ENCODE measurements at regions of chr22 and their contacts with region 1.

Region 1: DNA sequence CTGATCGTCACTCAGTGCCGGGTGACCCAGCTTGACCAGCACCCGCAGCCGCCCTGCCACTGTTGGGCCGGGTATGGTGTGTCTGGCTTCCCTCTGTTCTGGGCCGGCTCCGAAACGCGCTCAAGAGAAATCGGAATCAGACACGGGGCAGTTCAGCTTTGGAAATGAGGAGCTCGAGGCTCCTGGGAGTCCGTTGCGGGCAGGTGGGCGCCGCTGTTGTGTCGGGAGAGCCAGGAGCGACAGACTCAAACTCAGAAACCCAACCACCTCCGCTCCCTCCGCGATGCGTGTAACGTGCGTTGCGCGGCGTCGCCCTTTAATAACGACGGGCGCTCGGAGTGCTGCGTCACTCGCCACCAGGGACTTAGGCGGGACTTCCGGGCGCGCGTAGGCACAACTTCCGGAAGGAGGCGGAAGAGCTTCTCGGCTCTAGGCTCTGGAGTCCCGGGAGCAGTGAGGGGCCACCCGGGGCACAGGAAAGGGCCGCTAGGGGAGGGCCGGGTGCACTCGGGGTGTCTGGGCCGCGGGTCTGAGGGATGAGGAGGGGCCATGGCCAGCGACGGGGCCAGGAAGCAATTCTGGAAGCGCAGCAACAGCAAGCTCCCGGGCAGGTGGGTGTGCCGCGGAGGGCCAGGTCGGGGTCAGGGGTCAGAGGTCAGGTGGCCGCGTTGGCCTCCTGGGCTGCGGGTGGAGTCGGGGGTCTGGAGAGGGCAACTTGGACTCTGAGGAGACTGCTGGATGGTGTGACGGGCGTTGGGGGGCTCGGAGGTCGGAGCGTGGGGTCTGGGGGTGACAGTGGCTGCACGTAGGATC is at the start of gene TBC1D22A:
- DNase-seq: peak; percentile 91
- H3K4me3 Mint-ChIP-seq: peak within 1 kb of the TSS; percentile 99
- H3K27ac Mint-ChIP-seq: peak within 1 kb of the TSS; percentile 95
- H3K4me1 Mint-ChIP-seq: peaks cover 38% of the 10 kb centered on the region
- H3K27me3 Mint-ChIP-seq: no peaks in the 10 kb centered on the region
- total RNA-seq, gene TBC1D22A: 34.8 and 38.3 TPM in 2 replicates

Region 2: GRCh38 chr22:46737976-46738646 is 24.3 kb before region 1 on chr22 and contains the start of gene CERK:
- intact Hi-C with region 1: loop called (anchors 1 kb)
- DNase-seq: peak; percentile 62
- H3K4me3 Mint-ChIP-seq: peak within 1 kb of the TSS; percentile 100
- H3K27ac Mint-ChIP-seq: peak within 1 kb of the TSS; percentile 99
- H3K4me1 Mint-ChIP-seq: peaks cover 34% of the 10 kb centered on the region
- H3K27me3 Mint-ChIP-seq: no peaks in the 10 kb centered on the region
- total RNA-seq, gene CERK: 57.1 and 62.8 TPM in 2 replicates

Region 3: GRCh38 chr22:46791201-46791731 is 28.8 kb after region 1 on chr22:
- intact Hi-C with region 1: loop called (anchors 1 kb)
- DNase-seq: peak; percentile 72
- H3K4me3 Mint-ChIP-seq: peak overlapping the region; percentile 75
- H3K27ac Mint-ChIP-seq: peak overlapping the region; percentile 100
- H3K4me1 Mint-ChIP-seq: peaks cover 39% of the 10 kb centered on the region
- H3K27me3 Mint-ChIP-seq: no peaks in the 10 kb centered on the region

Region 4: DNA sequence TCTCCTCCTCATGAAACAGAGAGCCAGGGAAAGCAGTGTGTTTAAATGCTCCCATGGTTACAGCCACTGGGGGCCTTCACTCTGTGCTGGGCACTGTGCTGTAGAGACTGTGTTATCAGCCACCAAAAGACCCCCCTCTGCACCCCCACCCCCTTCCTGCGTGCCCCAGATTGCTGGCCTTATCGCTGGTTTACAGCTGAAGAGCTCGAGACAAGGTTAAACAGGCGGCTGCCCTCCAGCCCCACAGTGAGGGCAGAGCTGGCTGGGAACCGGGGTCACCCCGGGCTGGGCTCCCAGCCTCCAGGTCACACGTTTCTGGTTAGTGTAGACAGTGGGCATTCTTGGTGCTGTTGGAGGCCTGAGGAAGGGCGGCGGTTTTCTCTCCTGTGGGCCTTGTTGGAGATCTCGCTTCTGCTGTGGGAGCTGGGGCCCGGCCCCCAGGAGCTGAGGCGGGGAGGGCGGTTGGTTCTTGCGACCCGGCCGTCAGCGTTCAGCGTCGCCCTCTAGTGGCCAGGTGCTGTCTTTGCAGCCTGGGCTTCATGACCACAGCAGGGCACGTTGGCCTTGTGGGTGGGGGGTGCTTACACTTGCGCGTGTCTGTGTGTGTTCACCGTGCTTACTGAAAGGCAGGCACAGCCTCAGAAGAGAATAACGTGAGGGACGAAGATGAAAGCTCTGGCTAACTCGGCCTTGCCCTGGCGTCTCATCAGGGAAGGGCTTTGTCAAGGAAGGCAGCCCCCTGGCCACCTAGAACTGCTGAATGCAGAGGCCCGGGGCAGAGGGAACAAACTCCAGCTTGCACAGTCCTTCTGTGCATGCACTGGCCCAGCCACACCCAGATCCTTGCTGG is 40.8 kb after region 1 on chr22:
- intact Hi-C with region 1: loop called (anchors 2 kb)
- DNase-seq: peak; percentile 53
- H3K4me3 Mint-ChIP-seq: no peak overlapping the region
- H3K27ac Mint-ChIP-seq: no peak overlapping the region
- H3K4me1 Mint-ChIP-seq: peaks cover 34% of the 10 kb centered on the region
- H3K27me3 Mint-ChIP-seq: no peaks in the 10 kb centered on the region

Measured in activated T-helper 2 cell treated with anti-CD3 and anti-CD28 coated beads, Interferon-gamma antibody, Interleukin-2, Interleukin-4, amounts not matched to agents 10 μg/mL and 5 μg/mL and 100 μg/mL, durations not matched to agents 14 hours and 24 hours and 36 hours (primary cell).